ENCODE measurements at regions of chr9 and their contacts with region 1.

Region 1: GRCh38 chr9:125361837-125362531 is 100.4 kb downstream of the GAPVD1 start:
- DNase-seq: peak; percentile 10
- ATAC-seq: peak; percentile 69
- H3K4me3 ChIP-seq: no peak overlapping the region
- H3K27ac ChIP-seq: no peak overlapping the region
- H3K4me1 ChIP-seq: no peaks in the 10 kb centered on the region
- H3K27me3 ChIP-seq: no peaks in the 10 kb centered on the region
- CTCF ChIP-seq: peak in 2 of 3 experiments; percentile 38 to 58; a peak in 3 of 6 replicates
- POLR2A ChIP-seq: no peak
- RAD21 ChIP-seq: peak; percentile 37

Region 2: DNA sequence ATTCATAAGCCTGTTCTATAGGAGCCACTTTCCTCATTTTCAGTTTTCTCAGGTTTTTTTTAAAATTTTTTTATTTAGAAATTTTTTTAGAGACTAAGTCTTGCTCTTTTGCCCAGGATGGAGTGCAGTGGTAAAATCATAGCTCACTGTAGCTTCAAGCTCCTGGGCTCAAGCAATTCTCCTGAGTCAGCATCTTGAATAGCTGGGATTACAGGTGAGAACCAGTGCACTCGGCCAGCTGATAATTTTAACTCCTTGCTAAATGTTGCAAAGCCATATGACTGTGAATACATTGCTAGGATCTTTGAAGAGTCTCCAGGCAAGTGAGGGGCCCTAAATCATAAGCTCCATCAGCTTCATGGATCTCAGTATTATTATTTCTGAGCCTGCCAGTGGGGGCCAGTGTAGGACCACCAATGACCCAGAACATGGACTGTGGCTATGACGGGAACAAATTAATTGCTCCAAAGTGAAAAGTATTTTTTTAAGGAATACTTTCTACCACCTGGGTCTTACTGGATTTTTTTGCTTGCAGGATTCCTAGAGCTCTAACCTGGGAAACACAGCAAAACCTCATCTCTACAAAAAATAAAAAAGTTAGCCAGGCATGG is 106.1 kb before region 1 on chr9:
- CTCF ChIA-PET with region 1: interaction called, 28 read pairs
- POLR2A ChIA-PET with region 1: interaction called, 3 read pairs
- RAD21 ChIA-PET with region 1: no interaction called
- intact Hi-C with region 1: loop called (anchors 1 kb)
- DNase-seq: no peak
- ATAC-seq: peak; percentile 77
- H3K4me3 ChIP-seq: no peak overlapping the region
- H3K27ac ChIP-seq: no peak overlapping the region
- H3K4me1 ChIP-seq: peaks cover 3 to 4% of the 10 kb centered on the region in 2 experiments; a peak in 2 of 4 replicates
- H3K27me3 ChIP-seq: no peaks in the 10 kb centered on the region
- CTCF ChIP-seq: peak; percentile 19 to 41 (median 41); a peak in 4 of 6 replicates
- POLR2A ChIP-seq: no peak
- RAD21 ChIP-seq: peak; percentile 76

Region 3: DNA sequence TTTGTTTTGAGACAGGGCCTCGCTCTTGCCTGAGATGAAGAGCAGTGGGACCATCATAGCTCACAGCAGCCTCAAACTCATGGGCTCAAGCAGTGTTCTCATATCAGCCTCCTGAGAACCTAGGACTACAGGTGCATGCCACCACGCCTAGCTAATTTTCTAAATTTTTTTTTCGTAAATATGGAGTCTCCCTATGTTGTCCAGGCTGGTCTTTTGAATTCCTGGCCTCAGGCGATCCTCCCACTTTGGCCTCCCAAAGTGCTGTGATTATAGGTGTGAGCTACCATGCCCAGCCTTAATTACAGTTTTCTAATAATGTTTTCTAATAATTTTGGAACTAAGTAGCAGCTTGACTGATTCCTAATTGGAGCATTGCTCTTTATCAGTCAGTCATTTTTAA is 85.2 kb before region 1 on chr9:
- CTCF ChIA-PET with region 1: no interaction called
- POLR2A ChIA-PET with region 1: no interaction called
- RAD21 ChIA-PET with region 1: no interaction called
- intact Hi-C with region 1: loop called (anchors 5 kb)
- DNase-seq: no peak
- ATAC-seq: no peak
- H3K4me3 ChIP-seq: no peak overlapping the region
- H3K27ac ChIP-seq: no peak overlapping the region
- H3K4me1 ChIP-seq: no peaks in the 10 kb centered on the region
- H3K27me3 ChIP-seq: no peaks in the 10 kb centered on the region
- CTCF ChIP-seq: no peak
- POLR2A ChIP-seq: no peak
- RAD21 ChIP-seq: no peak

Region 4: DNA sequence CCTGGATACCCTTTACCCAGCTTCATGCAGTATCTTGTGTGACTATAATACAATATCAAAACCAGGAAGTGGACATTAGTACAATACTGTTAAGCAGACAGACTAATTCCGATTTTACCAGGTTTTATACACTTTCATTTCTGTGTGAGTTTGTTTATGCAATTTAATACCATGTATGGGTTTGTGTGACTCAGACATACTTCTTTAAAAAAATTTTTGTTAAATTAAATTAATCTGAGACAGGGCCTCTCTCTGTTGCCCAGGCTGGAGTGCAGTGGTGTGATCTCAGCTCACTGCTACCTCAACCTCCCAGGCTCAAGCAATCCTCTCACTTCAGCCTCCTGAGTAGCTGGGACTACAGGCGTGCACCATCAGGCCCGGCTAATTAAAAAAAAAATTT is 56.4 kb after region 1 on chr9:
- CTCF ChIA-PET with region 1: no interaction called
- POLR2A ChIA-PET with region 1: no interaction called
- RAD21 ChIA-PET with region 1: no interaction called
- intact Hi-C with region 1: no loop called
- DNase-seq: no peak
- ATAC-seq: no peak
- H3K4me3 ChIP-seq: no peak overlapping the region
- H3K27ac ChIP-seq: no peak overlapping the region
- H3K4me1 ChIP-seq: peaks cover 0 to 7% of the 10 kb centered on the region in 2 experiments; a peak in 2 of 4 replicates
- H3K27me3 ChIP-seq: no peaks in the 10 kb centered on the region
- CTCF ChIP-seq: no peak
- POLR2A ChIP-seq: no peak
- RAD21 ChIP-seq: no peak

Measured in HCT116 (cell line).